ENCODE measurements at regions of chr16 and their contacts with region 1.

Region 1: DNA sequence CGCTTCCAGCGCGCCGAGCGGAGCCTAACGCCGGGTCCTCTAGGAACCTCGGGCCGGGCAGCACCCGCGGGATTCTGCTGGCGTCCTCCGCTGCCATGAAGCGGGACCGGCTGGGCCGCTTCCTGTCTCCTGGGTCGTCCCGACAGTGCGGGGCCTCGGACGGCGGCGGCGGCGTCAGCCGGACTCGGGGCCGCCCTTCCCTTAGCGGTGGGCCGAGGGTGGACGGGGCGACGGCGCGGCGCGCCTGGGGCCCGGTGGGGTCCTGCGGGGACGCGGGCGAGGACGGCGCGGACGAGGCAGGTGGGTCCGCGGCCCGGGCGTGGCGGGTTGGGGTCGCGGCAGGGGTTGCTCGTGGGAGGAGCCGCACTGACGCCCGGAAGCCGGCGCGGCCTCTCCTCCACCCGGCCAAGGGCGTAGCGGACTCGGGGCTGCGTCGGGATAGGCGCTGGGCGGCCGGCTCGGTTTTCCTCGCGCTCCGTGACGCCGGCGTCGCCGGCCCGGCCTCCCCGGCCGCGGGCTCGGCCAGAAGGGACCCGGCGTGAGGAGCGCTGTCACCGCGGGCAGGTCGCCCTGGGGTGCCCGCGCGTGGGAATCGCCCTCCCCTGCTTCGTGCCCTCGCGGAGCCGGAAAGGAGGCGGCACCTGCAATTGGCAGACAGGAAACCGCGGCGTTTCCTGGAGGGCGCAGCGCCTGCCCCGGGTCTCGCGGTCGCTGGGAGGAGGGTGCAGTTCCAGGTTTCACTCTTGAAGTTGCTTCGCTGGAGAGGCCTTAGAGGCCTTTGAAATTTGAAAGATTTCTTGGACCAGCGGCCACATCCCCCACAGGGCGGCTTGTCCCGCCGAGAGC is 432 bp downstream of the ZNF276 start:
- DNase-seq: peak; percentile 91
- ATAC-seq: peak; percentile 40
- H3K4me3 Mint-ChIP-seq: peak overlapping the region; percentile 93
- H3K27ac Mint-ChIP-seq: peak overlapping the region; percentile 98
- H3K4me1 Mint-ChIP-seq: peaks cover 40% of the 10 kb centered on the region
- H3K27me3 Mint-ChIP-seq: no peaks in the 10 kb centered on the region

Region 2: GRCh38 chr16:89678258-89678657 is 43.5 kb before region 1 on chr16:
- CTCF ChIA-PET with region 1: no interaction called
- POLR2A ChIA-PET with region 1: no interaction called
- DNase-seq: no peak
- ATAC-seq: no peak
- H3K4me3 Mint-ChIP-seq: no peak overlapping the region
- H3K27ac Mint-ChIP-seq: no peak overlapping the region
- H3K4me1 Mint-ChIP-seq: no peaks in the 10 kb centered on the region
- H3K27me3 Mint-ChIP-seq: no peaks in the 10 kb centered on the region

Region 3: DNA sequence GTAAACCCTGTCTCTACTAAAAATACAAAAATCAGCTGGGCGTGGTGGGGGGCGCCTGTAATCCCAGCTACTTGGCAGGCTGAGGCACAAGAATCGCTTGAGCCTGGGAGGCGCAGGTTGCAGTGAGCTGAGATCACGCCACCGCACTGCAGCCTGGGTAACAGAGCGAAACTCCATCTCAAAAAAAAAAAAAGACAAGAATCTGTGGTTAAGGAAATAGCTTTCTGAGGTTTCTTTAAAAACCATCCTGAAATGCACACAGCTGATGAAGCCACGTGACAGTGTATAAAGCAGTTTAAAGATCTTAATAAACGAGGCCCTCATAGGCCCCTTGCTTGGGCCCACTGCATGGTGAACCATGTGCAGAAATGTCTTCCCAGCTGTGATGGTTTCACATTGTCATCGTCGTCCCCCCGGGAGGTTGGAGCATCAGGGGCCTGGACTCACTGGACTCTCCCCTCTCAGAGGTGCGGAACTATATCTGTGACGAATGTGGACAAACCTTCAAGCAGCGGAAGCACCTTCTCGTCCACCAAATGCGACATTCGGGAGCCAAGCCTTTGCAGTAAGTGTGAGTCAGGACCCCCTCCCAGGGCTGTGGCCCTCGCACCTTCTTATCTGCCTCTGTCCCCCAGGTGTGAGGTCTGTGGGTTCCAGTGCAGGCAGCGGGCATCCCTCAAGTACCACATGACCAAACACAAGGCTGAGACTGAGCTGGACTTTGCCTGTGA is 15.7 kb after region 1 on chr16:
- CTCF ChIA-PET with region 1: interaction called, 3 read pairs
- POLR2A ChIA-PET with region 1: interaction called, 42 read pairs
- DNase-seq: peak; percentile 70
- ATAC-seq: peak; percentile 63
- H3K4me3 Mint-ChIP-seq: peak overlapping the region; percentile 15
- H3K27ac Mint-ChIP-seq: peak overlapping the region; percentile 71
- H3K4me1 Mint-ChIP-seq: peaks cover 32% of the 10 kb centered on the region
- H3K27me3 Mint-ChIP-seq: no peaks in the 10 kb centered on the region